Right cardiac atrium (tissue), 5 donors: ENCODE measurements at regions of chrX and their contacts with region 1.

Region 1: GRCh38 chrX:139559383-139560042 is 29.0 kb downstream of the F9 start:
- DNase-seq: no peak
- ATAC-seq: peak in 1 of 2 donors; percentile 54
- H3K4me3 ChIP-seq: no peak overlapping the region
- H3K27ac ChIP-seq: no peak overlapping the region
- H3K4me1 ChIP-seq: no peaks in the 10 kb centered on the region
- H3K27me3 ChIP-seq: no peaks in the 10 kb centered on the region

Region 2: GRCh38 chrX:138775517-138775916 is 784.0 kb before region 1 on chrX:
- intact Hi-C with region 1: loop called in 1 of 4 experiments (anchors 10 kb)
- DNase-seq: no peak
- ATAC-seq: no peak
- H3K4me3 ChIP-seq: no peak overlapping the region
- H3K27ac ChIP-seq: no peak overlapping the region
- H3K4me1 ChIP-seq: no peaks in the 10 kb centered on the region
- H3K27me3 ChIP-seq: no peaks in the 10 kb centered on the region

Region 3: DNA sequence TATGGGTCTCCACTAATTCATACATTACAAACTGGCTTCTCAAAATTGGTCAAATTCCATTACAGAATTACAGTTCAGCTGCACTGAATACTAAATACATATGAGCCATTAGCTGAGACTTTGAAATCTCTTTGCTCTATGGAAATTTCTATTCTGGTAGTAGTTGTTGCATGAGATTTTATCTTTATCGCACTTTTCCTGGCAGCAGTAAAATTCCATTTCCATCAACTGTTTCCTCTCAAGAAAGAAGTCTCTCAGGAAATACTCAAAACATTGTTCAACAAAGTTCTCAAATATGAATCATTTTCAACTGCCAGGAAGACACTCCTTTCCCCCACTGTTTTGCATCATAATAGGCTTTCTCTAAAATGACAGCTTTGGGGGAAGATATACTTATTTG is 322.1 kb after region 1 on chrX:
- intact Hi-C with region 1: no loop called
- DNase-seq: no peak
- ATAC-seq: peak in 1 of 2 donors; percentile 69
- H3K4me3 ChIP-seq: no peak overlapping the region
- H3K27ac ChIP-seq: peak overlapping the region; percentile 68
- H3K4me1 ChIP-seq: peaks cover 7% of the 10 kb centered on the region
- H3K27me3 ChIP-seq: no peaks in the 10 kb centered on the region